AG04450 (cell line): ENCODE measurements at regions of chr1 and their contacts with region 1.

Region 1: DNA sequence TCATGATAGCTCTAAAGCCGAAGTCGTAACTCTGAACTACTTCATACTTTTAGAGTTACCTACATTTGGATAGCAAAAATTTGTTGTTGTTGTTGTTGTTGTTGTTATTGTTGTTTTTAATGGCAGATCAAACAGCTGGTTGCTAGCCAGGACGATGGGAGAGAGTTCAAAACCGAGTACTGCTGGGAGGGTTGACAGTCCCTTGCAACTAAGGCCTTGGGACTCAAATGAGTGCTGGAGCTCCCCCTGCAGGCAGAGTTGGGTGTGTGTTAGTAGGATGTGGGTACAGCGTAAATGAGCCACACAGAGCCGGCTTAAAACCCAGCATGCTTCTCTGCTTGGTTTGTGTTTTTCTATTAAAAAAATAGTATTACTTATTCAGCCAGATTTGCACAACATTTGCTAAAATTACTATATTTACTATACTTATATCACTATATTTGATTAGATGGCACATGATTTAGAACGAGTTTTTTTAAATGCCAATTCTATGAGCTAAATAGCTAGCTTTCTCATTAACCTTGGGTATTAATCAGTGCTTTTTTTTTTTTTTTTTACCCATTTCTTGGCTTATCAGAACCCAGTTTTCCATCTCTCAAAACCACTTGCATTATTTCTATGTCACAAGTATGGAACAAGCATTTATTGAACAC is 129.2 kb upstream of the SYT6 start:
- DNase-seq: peak; percentile 81
- H3K4me3 ChIP-seq: no peak overlapping the region
- H3K27ac ChIP-seq: no peak overlapping the region
- H3K27me3 ChIP-seq: peaks cover 10% of the 10 kb centered on the region
- CTCF ChIP-seq: peak; percentile 97

Region 2: DNA sequence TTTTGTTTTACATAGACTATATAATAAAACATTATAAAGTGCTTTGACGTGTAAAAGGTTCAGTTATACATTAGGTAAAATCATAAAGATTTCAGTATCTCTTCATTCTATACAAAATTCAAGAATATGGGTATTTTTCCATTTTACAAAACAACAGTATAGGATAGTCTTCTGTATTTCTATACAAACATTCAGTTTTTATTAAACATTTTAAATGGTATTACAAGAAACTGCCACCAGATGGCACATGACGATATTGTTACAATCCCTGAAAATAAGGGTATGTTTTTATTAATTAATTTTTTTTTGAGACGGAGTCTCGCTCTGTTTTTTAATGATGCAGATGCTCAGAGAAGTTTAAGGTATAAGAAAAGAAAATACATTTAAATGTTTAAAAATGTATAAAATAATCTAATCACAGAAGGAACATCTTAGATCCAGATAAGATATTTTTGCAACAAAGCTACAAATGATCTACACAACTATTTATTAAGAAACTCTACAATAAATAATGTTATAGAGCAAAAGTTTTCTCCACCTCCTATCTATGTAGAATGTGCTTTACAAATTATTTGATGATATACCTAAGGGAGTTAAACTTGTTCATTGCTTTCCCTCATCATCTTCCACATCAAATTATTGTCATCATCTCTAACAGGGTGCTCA is 447.1 kb before region 1 on chr1:
- CTCF ChIA-PET with region 1: interaction called, 19 read pairs
- POLR2A ChIA-PET with region 1: no interaction called
- DNase-seq: peak; percentile 16
- H3K4me3 ChIP-seq: no peak overlapping the region
- H3K27ac ChIP-seq: no peak overlapping the region
- H3K27me3 ChIP-seq: no peaks in the 10 kb centered on the region
- CTCF ChIP-seq: peak; percentile 52

Region 3: DNA sequence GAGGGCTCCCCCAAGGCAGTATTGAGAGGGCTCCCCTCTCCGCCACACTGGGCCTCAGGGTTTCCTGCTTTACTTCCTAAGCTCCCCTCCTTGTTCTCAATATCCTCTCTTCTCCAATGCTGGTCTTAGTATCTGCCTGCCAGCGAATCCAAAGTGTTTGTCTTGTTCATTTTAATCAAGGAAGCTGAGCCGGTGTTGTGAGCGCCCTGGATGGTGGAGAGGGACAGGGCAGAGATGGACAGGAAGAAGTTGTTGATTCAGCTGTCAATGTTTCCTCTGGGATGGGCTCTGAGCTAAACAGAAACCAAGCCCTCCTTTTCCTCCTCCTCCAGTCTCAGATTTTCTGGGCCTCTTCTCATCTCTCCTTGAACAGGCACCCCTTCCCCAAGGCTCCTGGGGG is 298.2 kb before region 1 on chr1:
- CTCF ChIA-PET with region 1: interaction called, 122 read pairs
- POLR2A ChIA-PET with region 1: interaction called, 10 read pairs
- DNase-seq: no peak
- H3K4me3 ChIP-seq: no peak overlapping the region
- H3K27ac ChIP-seq: no peak overlapping the region
- H3K27me3 ChIP-seq: no peaks in the 10 kb centered on the region
- CTCF ChIP-seq: no peak

Region 4: GRCh38 chr1:114263343-114263742 is 19.5 kb before region 1 on chr1:
- CTCF ChIA-PET with region 1: interaction called, 13 read pairs
- POLR2A ChIA-PET with region 1: no interaction called
- DNase-seq: no peak
- H3K4me3 ChIP-seq: no peak overlapping the region
- H3K27ac ChIP-seq: no peak overlapping the region
- H3K27me3 ChIP-seq: no peaks in the 10 kb centered on the region
- CTCF ChIP-seq: no peak

Region 5: GRCh38 chr1:114299331-114299975 is 16.6 kb after region 1 on chr1:
- CTCF ChIA-PET with region 1: interaction called, 42 read pairs
- POLR2A ChIA-PET with region 1: no interaction called
- DNase-seq: no peak
- H3K4me3 ChIP-seq: no peak overlapping the region
- H3K27ac ChIP-seq: no peak overlapping the region
- H3K27me3 ChIP-seq: peaks cover 16% of the 10 kb centered on the region
- CTCF ChIP-seq: peak; percentile 46

Region 6: GRCh38 chr1:114339379-114339778 is 56.5 kb after region 1 on chr1:
- CTCF ChIA-PET with region 1: interaction called, 10 read pairs
- POLR2A ChIA-PET with region 1: no interaction called
- DNase-seq: no peak
- H3K4me3 ChIP-seq: no peak overlapping the region
- H3K27ac ChIP-seq: no peak overlapping the region
- H3K27me3 ChIP-seq: peaks cover 12% of the 10 kb centered on the region
- CTCF ChIP-seq: no peak